Gastrocnemius medialis (tissue), 4 donors: ENCODE measurements at regions of chr3 and their contacts with region 1.

Region 1: DNA sequence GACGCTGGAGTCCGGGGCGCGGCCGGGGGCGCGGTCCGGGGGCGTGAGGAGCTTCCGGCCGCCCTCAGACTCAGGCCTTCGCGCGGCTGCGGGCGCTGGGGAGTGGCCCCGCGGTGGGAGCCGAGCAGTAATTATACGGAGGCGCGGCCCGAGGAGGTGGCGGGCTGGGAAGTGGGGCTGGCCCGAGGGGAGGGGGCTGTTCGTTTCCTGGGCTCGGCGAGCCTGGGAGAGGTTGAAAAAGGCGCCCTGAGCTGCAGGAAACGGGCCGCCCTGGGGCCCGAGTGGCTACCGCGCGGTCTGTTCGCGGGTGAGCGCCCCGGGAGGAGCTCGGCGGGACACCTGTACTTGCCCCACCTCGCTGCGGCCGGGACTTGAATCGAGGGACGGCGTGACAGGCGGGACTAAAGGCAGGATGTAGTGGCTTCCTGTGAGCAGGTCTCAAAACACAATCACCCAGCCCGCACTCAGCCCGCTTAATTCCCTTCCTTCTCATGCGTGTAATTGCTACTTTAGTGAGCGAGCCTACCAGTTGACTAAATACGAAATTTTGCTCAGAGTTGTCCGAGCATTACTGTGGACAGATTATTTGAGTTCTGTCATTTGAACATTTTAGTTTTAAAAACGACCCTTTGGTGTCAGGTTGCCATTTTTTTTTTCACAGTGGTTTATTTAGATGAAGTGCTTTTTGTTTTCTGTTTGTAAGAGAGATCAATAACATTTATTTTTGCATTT is 860 bp downstream of the RASA2 start:
- DNase-seq: peak; percentile 59 to 69
- ATAC-seq: peak; percentile 71 to 75
- H3K4me3 ChIP-seq: peak overlapping the region; percentile 60 to 92 (median 78)
- H3K27ac ChIP-seq: peak overlapping the region; percentile 84 to 91 (median 86)
- H3K4me1 ChIP-seq: peaks cover 7 to 14% of the 10 kb centered on the region in 2 donors
- H3K27me3 ChIP-seq: no peaks in the 10 kb centered on the region
- CTCF ChIP-seq: peak in 1 of 5 experiments; percentile 22
- POLR2A ChIP-seq: peak; percentile 29 to 60

Region 2: DNA sequence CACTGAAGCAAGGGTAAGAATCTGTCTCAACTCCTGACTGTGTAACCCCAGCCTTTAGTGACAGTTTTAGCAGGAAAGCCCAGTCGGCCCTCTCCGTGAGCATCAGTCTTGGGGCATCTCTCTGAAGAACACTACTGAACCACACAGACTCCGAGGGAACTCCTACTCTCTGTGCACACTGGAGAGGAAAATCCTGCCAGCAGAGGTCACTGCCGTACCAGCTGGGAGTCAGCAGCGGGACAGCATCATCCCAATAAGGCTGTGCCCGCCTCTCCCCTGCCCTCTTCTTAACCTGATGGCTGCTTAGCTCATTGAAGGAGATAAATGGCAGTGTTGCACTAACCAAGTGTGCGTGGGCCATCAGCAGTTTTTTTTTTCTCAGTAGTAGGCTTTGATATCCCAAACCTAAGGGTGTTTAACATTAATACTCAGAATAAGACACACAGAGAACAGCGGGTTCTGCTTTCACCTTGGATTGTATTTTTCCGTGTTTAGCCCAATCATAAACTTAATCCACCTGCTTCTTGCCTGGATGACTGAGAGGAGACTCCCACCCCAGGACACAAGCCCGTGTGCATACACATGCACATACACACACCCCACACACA is 27.5 kb before region 1 on chr3:
- in situ Hi-C with region 1: no loop called
- intact Hi-C with region 1: loop called (anchors 2 kb)
- DNase-seq: peak; percentile 60 to 79
- ATAC-seq: peak; percentile 81 to 87
- H3K4me3 ChIP-seq: no peak overlapping the region
- H3K27ac ChIP-seq: no peak overlapping the region
- H3K4me1 ChIP-seq: peaks cover under 1 to 4% of the 10 kb centered on the region in 2 donors
- H3K27me3 ChIP-seq: no peaks in the 10 kb centered on the region
- CTCF ChIP-seq: peak; percentile 72 to 91 (median 81)
- POLR2A ChIP-seq: no peak